B cell (primary cell): ENCODE measurements at regions of chr1 and their contacts with region 1.

Region 1: GRCh38 chr1:110106013-110106941 is 6.0 kb upstream of the UBL4B start:
- DNase-seq: peak; percentile 76
- ATAC-seq: peak; percentile 83
- H3K4me3 ChIP-seq: no peak overlapping the region
- H3K4me3 Mint-ChIP-seq: no peak overlapping the region
- H3K27ac ChIP-seq: no peak overlapping the region
- H3K27ac Mint-ChIP-seq: no peak overlapping the region
- H3K4me1 ChIP-seq: peaks cover 16 to 24% of the 10 kb centered on the region in 2 donors
- H3K4me1 Mint-ChIP-seq: peaks cover 27% of the 10 kb centered on the region
- H3K27me3 ChIP-seq: no peaks in the 10 kb centered on the region
- H3K27me3 Mint-ChIP-seq: peaks cover 20% of the 10 kb centered on the region
- CTCF ChIP-seq: peak; percentile 93

Region 2: GRCh38 chr1:109341944-109342930 is 764.0 kb before region 1 on chr1:
- CTCF ChIA-PET with region 1: no interaction called
- POLR2A ChIA-PET with region 1: no interaction called
- intact Hi-C with region 1: no loop called
- DNase-seq: no peak
- ATAC-seq: no peak
- H3K4me3 ChIP-seq: no peak overlapping the region
- H3K4me3 Mint-ChIP-seq: no peak overlapping the region
- H3K27ac ChIP-seq: no peak overlapping the region
- H3K27ac Mint-ChIP-seq: no peak overlapping the region
- H3K4me1 ChIP-seq: no peaks in the 10 kb centered on the region
- H3K4me1 Mint-ChIP-seq: no peaks in the 10 kb centered on the region
- H3K27me3 ChIP-seq: peaks cover 0 to 4% (median 0%) of the 10 kb centered on the region in 4 experiments
- H3K27me3 Mint-ChIP-seq: peaks cover 19% of the 10 kb centered on the region
- CTCF ChIP-seq: no peak

Region 3: GRCh38 chr1:110053557-110054428 is 52.5 kb before region 1 on chr1:
- CTCF ChIA-PET with region 1: interaction called, 93 read pairs
- POLR2A ChIA-PET with region 1: no interaction called
- intact Hi-C with region 1: loop called (anchors 1 kb)
- DNase-seq: peak; percentile 74
- ATAC-seq: peak; percentile 77
- H3K4me3 ChIP-seq: no peak overlapping the region
- H3K4me3 Mint-ChIP-seq: no peak overlapping the region
- H3K27ac ChIP-seq: no peak overlapping the region
- H3K27ac Mint-ChIP-seq: peak overlapping the region; percentile 21
- H3K4me1 ChIP-seq: no peaks in the 10 kb centered on the region
- H3K4me1 Mint-ChIP-seq: no peaks in the 10 kb centered on the region
- H3K27me3 ChIP-seq: no peaks in the 10 kb centered on the region
- H3K27me3 Mint-ChIP-seq: no peaks in the 10 kb centered on the region
- CTCF ChIP-seq: peak; percentile 97

Region 4: DNA sequence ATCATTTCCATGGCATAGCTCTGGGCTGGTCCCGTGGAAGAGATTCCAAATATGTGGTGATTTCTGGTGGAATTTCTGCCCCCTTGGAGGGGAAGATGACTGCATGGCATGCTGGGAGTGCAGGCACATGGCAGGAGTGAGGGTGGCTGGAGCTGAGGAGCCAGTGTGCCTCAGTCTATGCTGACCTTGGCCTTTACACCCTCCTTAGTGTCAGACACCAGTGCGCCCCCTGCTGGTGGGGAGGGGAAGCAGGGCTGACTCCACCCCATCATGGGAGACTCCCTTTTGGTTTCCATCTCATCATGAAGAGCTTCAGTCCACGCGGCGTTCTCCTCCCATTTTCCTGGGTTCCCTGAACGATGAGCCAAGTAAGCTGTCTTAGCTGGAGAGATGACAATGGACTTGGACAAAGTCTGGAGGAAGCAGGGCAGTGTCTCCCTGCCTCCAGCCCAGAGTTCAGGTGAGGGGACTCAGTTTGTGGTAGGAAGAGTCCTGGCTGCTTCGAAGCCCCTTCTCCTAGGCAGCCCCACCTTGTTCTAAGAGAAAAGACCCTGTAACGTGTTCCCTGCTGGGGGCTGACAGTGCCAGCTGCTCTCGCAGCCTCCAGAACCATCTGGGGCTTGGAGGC is 46.1 kb before region 1 on chr1:
- CTCF ChIA-PET with region 1: interaction called, 93 read pairs
- POLR2A ChIA-PET with region 1: no interaction called
- intact Hi-C with region 1: no loop called
- DNase-seq: peak; percentile 76
- ATAC-seq: peak; percentile 73
- H3K4me3 ChIP-seq: no peak overlapping the region
- H3K4me3 Mint-ChIP-seq: no peak overlapping the region
- H3K27ac ChIP-seq: no peak overlapping the region
- H3K27ac Mint-ChIP-seq: no peak overlapping the region
- H3K4me1 ChIP-seq: no peaks in the 10 kb centered on the region
- H3K4me1 Mint-ChIP-seq: no peaks in the 10 kb centered on the region
- H3K27me3 ChIP-seq: no peaks in the 10 kb centered on the region
- H3K27me3 Mint-ChIP-seq: peaks cover 1% of the 10 kb centered on the region
- CTCF ChIP-seq: peak; percentile 85

Region 5: GRCh38 chr1:110082477-110082876 is 23.8 kb before region 1 on chr1:
- CTCF ChIA-PET with region 1: interaction called, 47 read pairs
- POLR2A ChIA-PET with region 1: no interaction called
- intact Hi-C with region 1: no loop called
- DNase-seq: no peak
- ATAC-seq: no peak
- H3K4me3 ChIP-seq: no peak overlapping the region
- H3K4me3 Mint-ChIP-seq: peak overlapping the region; percentile 30
- H3K27ac ChIP-seq: no peak overlapping the region
- H3K27ac Mint-ChIP-seq: no peak overlapping the region
- H3K4me1 ChIP-seq: peaks cover 12 to 17% of the 10 kb centered on the region in 2 donors
- H3K4me1 Mint-ChIP-seq: peaks cover 11% of the 10 kb centered on the region
- H3K27me3 ChIP-seq: peaks cover 0 to 54% (median 27%) of the 10 kb centered on the region in 4 experiments
- H3K27me3 Mint-ChIP-seq: peaks cover 64% of the 10 kb centered on the region
- CTCF ChIP-seq: no peak

Region 6: DNA sequence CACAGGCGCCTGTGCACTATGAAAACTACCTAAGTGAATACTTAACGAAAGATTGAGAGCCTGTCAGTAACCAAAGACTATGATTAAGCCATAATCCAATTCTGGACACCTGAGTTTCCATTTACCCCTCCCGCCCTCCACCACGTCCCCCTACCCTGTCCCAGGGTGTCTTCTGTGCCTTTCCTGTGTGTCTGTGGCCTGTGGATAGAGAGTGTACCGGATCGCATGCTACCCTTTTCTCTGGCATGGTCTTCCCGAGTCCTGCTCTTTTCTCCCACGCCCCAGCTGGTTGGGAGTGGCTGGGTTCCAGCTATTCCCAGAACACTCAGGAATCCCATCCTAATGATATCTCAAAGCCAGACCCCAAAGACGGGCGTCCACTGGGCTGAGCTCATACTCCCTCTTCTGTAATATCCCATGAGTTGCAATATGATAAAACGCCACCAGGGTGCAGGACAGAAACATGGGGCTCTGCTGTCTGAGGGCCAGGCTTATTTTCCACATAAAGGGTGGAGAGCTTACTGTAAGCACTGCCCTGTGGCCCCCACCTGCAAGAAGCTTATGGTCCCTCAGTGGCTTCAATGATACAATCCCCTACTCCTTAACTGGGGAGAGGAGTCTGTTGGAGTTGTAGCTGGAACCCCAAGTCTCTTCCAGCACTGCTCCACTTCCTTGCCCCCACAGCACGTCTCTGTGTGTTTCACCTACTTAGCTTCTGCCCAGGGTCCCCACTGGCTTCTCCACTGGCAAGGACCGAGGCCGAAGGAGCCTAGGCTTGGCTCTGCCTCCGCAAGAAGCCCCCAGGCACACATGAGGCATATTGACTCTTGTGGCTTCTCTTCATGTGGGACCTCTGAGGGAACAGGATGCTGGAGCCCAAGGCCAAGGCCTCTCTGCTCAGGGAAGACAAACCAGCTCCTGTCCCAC is 18.2 kb before region 1 on chr1:
- CTCF ChIA-PET with region 1: interaction called, 47 read pairs
- POLR2A ChIA-PET with region 1: no interaction called
- intact Hi-C with region 1: loop called (anchors 1 kb)
- DNase-seq: peak; percentile 72
- ATAC-seq: peak; percentile 59
- H3K4me3 ChIP-seq: no peak overlapping the region
- H3K4me3 Mint-ChIP-seq: no peak overlapping the region
- H3K27ac ChIP-seq: no peak overlapping the region
- H3K27ac Mint-ChIP-seq: no peak overlapping the region
- H3K4me1 ChIP-seq: peaks cover 10 to 18% of the 10 kb centered on the region in 2 donors
- H3K4me1 Mint-ChIP-seq: peaks cover 11% of the 10 kb centered on the region
- H3K27me3 ChIP-seq: peaks cover 0 to 47% (median 19%) of the 10 kb centered on the region in 4 experiments
- H3K27me3 Mint-ChIP-seq: peaks cover 48% of the 10 kb centered on the region
- CTCF ChIP-seq: peak; percentile 79

Region 7: DNA sequence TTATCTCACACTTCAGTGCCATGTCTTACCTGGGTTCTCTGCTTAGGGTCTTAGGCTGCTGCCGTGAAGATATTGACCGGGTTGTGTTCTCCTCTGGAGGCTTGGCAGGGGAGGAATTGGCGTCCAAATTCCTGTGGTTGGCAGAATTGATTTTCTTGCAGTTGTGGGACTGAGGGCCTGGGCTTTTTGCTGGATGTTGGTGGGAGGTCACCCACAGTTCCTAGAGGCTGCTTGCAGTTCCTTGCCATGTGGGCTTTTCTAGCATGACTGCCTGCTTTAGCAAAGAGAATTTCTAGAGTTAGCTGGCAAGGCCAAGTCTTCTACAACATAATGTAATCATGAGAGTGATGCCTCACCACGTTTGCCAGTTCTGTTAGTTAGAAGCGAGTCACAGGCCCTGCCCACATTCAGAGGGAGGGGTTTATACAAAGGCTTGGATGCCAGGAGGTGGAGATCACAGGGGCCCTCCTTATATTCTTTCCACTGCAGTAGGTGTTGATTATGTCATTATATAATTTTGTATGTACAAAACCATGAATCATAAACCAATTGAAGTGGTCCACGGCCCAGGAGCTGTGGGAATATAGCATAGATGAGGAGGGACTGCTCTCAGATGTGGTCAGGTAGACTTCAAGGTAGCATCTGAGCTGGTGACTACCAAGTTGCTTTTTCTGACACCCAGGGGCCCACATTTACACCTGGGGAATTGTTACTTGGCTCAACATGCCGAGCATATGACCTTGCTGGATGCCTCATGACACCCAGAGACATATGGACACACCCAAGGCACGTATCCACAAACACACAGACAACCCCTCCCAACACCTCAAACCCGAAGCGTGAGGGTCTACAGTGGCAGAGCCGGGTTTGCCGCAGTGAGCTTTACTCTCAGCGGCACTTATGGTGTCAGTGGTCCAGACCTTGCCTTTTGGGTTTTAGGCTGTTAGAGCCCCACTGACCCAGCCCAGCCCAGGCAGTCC is 12.6 kb after region 1 on chr1:
- CTCF ChIA-PET with region 1: interaction called, 10 read pairs
- POLR2A ChIA-PET with region 1: no interaction called
- intact Hi-C with region 1: no loop called
- DNase-seq: no peak
- ATAC-seq: no peak
- H3K4me3 ChIP-seq: no peak overlapping the region
- H3K4me3 Mint-ChIP-seq: no peak overlapping the region
- H3K27ac ChIP-seq: no peak overlapping the region
- H3K27ac Mint-ChIP-seq: no peak overlapping the region
- H3K4me1 ChIP-seq: no peaks in the 10 kb centered on the region
- H3K4me1 Mint-ChIP-seq: no peaks in the 10 kb centered on the region
- H3K27me3 ChIP-seq: peaks cover 0 to 11% (median 2%) of the 10 kb centered on the region in 4 experiments
- H3K27me3 Mint-ChIP-seq: peaks cover 44% of the 10 kb centered on the region
- CTCF ChIP-seq: no peak